Transverse colon (tissue), 4 donors: ENCODE measurements at regions of chr13 and their contacts with region 1.

Region 1: GRCh38 chr13:108322206-108322824 is 52.8 kb downstream of the TNFSF13B start:
- DNase-seq: no peak
- H3K4me3 ChIP-seq: no peak overlapping the region
- H3K27ac ChIP-seq: no peak overlapping the region
- H3K4me1 ChIP-seq: peaks cover 0 to 14% (median 8%) of the 10 kb centered on the region in 4 donors
- H3K27me3 ChIP-seq: no peaks in the 10 kb centered on the region
- CTCF ChIP-seq: peak; percentile 61 to 81 (median 64)
- EP300 ChIP-seq: no peak
- POLR2A ChIP-seq: no peak

Region 2: GRCh38 chr13:108508263-108508662 is 185.9 kb after region 1 on chr13:
- in situ Hi-C with region 1: loop called in 2 of 4 experiments (anchors 10 kb)
- intact Hi-C with region 1: no loop called
- DNase-seq: no peak
- H3K4me3 ChIP-seq: no peak overlapping the region
- H3K27ac ChIP-seq: no peak overlapping the region
- H3K4me1 ChIP-seq: no peaks in the 10 kb centered on the region
- H3K27me3 ChIP-seq: no peaks in the 10 kb centered on the region
- CTCF ChIP-seq: peak in 3 of 5 experiments; percentile 9 to 21 (median 15)
- EP300 ChIP-seq: no peak
- POLR2A ChIP-seq: no peak

Region 3: DNA sequence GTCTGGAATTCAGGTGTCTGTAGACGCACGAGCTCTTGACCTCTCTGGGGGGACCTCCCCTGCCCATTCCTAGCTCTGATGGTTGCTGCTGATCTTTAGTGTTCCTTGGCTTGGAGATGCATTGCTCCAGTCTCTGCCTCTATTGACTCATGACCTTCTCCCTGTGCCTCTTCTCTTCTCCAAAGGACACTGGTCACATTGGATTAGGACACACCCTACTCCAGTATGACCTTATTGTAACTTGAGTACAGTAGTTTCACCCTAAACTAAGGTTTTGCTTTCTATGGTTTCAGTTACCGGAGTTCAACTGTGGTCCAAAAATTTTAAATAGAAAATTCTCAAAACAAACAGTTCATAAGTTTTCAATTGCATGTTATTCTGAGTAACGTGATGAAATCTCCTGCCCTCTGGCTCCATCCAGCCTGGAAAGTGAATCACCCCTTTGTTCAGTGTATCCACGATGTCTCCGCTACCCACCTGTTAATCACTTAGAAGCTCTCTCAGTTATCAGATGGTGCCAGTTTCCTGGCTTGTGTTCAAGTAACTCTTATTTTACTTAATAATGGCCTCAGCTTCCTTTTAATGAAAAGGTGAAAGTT is 580.3 kb after region 1 on chr13:
- in situ Hi-C with region 1: loop called (anchors 10 kb)
- intact Hi-C with region 1: no loop called
- DNase-seq: no peak
- H3K4me3 ChIP-seq: no peak overlapping the region
- H3K27ac ChIP-seq: no peak overlapping the region
- H3K4me1 ChIP-seq: no peaks in the 10 kb centered on the region
- H3K27me3 ChIP-seq: no peaks in the 10 kb centered on the region
- CTCF ChIP-seq: no peak
- EP300 ChIP-seq: no peak
- POLR2A ChIP-seq: no peak

Region 4: DNA sequence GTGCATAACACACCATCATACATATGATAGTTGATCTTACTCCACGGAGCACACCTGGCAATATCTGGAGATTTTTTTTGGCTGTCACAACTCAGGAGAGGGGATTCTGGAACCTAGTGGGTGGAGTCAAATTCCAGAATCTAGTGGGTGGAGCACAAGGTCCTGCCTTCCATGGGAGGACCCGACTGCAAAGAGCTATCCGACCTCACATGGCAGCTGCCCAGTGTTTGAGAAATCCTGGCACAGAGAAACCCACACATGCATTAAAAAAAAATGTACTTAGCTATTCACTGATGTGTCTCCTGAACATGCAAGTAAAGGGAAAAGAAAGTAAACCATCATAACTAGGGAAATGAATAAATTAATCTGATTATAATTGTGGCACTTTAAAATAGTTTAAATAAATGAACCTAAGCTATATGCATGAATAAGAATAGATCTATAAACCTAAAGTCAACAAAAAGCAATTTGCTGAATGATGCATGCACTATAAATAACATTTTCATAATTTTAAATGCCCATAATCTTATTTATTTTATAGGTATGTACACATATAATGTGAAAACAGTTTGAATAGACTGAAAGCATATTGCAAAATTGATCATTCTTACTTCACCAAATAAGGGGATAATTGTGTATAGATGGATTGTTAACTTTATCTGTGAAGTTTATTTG is 607.4 kb after region 1 on chr13:
- in situ Hi-C with region 1: no loop called
- intact Hi-C with region 1: no loop called
- DNase-seq: no peak
- H3K4me3 ChIP-seq: no peak overlapping the region
- H3K27ac ChIP-seq: no peak overlapping the region
- H3K4me1 ChIP-seq: no peaks in the 10 kb centered on the region
- H3K27me3 ChIP-seq: no peaks in the 10 kb centered on the region
- CTCF ChIP-seq: no peak
- EP300 ChIP-seq: no peak
- POLR2A ChIP-seq: no peak